Aorta (tissue), 5 donors: ENCODE measurements at regions of chr1 and their contacts with region 1.

Region 1: DNA sequence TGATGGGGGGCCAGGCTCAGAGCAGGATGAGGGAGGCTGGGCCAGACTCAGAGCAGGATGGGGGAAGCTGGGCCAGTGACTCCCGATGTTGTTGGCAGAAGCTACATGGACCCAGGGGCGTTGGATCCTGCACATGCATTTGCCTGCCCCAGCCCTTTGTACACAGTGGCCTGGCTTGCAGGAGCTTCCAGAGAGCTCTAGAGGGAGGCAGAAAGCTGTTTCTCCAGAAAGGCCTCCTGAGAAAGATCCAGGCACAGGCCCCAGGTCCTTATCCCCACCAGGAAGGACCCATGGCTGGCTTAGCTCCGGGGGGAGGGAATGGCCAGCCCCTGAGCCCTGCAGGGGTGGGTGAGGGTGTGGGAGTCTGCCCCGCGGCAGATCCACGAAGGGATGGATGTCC is 106.6 kb upstream of the ACTRT2 start:
- DNase-seq: no peak
- ATAC-seq: no peak
- H3K4me3 ChIP-seq: no peak overlapping the region
- H3K27ac ChIP-seq: no peak overlapping the region
- H3K4me1 ChIP-seq: no peaks in the 10 kb centered on the region
- H3K27me3 ChIP-seq: no peaks in the 10 kb centered on the region

Region 2: DNA sequence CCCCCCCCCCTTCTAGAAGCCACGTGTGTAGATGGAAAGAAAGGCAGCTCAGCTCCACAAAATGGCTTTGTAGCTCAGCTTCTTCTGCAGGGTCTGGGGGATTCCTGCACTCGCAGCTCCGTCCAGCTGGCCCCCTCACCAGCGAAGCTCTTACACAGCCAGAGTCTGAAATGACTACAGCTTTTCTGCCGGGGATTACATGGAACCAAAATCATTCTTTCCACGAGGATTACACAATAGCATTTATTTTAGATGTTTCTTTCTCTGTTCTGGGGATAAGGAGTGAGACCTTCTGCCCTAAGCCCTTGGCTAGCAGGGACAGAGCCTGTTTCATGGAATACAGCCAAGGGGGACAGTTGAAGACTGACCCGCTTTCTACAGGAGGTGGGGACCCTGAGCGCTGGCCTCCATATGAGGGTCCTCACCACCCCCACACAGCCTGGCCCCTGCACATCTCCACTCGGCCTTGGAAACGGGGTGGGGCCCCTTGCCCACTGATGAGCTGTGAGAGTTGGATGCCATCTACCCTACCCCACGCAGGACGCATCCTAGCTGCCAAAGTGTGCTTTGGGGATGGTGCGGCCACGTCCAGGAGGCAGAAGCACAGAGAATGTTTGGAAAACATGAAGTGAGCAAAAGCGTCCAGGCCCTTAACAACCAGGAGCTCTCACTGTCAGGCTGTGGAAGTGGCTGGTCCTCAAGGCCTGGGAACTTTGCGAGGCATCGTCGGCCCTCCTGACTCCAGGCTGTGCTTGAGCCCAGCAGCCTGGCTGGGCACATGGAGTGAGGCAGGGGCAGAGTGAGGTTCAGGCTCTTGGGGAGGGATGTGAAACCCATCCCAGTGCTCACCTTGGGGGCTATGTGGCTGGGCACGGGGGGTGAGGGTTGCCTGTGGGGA is 121.1 kb after region 1 on chr1:
- intact Hi-C with region 1: no loop called
- DNase-seq: peak in 1 of 2 donors; percentile 57
- ATAC-seq: peak; percentile 16
- H3K4me3 ChIP-seq: no peak overlapping the region
- H3K27ac ChIP-seq: no peak overlapping the region
- H3K4me1 ChIP-seq: no peaks in the 10 kb centered on the region
- H3K27me3 ChIP-seq: no peaks in the 10 kb centered on the region

Region 3: GRCh38 chr1:3054474-3054873 is 139.8 kb after region 1 on chr1:
- intact Hi-C with region 1: loop called in 1 of 2 experiments (anchors 10 kb)
- DNase-seq: peak in 1 of 2 donors; percentile 57
- ATAC-seq: no peak
- H3K4me3 ChIP-seq: no peak overlapping the region
- H3K27ac ChIP-seq: no peak overlapping the region
- H3K4me1 ChIP-seq: no peaks in the 10 kb centered on the region
- H3K27me3 ChIP-seq: no peaks in the 10 kb centered on the region

Region 4: DNA sequence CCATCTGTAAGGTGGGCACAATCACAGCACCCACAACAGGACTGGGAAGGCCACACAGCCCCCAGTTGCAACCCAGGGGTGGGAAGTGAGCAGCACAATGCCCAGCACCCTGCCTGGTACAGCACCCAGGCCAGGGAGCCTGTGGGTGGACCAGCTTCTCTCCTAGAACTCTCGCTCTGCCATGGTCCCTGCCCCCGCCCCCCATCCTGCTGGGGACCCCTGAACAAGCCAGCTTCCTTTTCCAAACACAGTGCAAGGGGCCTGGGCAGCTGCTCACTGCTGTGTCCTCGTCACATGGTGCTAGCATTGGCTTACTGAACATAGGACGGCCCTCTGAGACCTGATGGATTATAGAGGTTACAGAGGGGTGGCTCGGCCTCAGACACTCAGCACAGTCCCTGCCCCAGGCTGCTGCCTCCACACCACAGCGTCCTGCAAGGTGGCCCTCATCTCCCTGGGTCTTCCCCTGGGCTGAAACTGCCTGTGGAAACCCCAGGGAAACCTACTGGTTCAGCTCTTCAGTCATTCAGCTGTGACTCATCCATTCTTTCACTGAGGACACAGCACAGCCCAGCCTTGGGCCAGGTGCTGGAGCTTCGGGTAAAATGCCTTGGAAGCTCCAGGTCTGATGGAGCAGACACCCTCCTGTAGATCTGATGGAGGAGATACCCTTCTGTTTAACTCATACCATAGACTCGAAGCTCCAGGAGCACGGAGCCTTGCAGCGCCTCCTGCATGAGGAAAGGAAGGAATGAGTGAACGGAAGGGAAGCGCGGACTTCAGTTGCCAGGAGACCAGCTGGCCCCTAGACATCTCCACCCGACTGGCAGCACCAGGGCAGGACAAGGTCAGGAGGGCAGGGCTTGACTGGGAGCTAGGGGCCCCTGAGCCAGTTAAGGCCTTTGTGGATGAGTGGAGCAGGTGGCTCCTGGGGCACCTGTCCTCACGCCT is 146.2 kb after region 1 on chr1:
- intact Hi-C with region 1: loop called (anchors 5 to 10 kb)
- DNase-seq: peak in 1 of 2 donors; percentile 71
- ATAC-seq: no peak
- H3K4me3 ChIP-seq: no peak overlapping the region
- H3K27ac ChIP-seq: no peak overlapping the region
- H3K4me1 ChIP-seq: no peaks in the 10 kb centered on the region
- H3K27me3 ChIP-seq: no peaks in the 10 kb centered on the region